ENCODE measurements at regions of chr16 and their contacts with region 1.

Region 1: DNA sequence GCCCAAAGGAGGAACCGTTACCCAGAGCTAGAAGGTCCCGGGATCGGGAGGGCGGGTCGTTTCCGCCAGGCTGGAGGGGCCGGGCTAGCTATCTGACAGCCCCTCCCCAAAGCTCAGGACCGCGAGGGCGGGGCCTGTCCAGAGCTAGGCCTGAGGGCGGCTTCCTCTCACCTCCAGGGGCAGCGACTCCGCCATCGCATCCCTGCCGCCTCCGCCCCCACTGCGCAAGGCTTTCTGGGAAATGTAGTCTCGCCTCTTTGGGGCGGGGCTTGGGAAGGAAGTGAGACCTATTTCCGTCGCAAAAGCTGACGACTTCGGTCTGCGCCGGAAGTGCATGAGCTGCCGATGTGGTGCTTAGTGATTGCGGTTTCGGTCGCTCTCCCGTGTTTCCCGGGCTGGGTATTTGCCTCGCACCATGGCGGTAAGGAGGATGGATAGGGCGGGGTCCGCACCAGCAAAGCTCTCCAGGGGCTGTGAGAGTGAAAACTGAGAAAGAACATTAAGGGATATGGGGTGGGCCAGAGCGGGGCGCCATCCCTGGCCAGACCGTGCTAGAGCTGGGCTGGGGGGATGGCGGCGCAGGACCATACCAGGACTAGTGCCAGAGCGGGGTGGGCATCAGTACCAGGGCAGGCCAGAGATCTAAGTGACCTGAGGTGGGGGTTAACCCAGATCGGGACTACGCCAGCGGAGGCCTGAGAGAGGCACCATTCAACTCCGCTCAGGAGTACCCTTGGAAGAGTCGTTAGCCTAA is at the start of gene TMEM208:
- DNase-seq: peak; percentile 98
- ATAC-seq: peak; percentile 98
- H3K4me3 Mint-ChIP-seq: peak within 1 kb of the TSS; percentile 100
- H3K27ac Mint-ChIP-seq: peak within 1 kb of the TSS; percentile 99
- H3K4me1 Mint-ChIP-seq: peaks cover 27% of the 10 kb centered on the region
- H3K27me3 Mint-ChIP-seq: no peaks in the 10 kb centered on the region
- CTCF ChIP-seq: no peak
- total RNA-seq, gene TMEM208: 37.1 and 41.3 TPM in 2 replicates

Region 2: GRCh38 chr16:67183627-67184328 is 43.2 kb before region 1 on chr16 and contains the start of gene MATCAP1:
- CTCF ChIA-PET with region 1: no interaction called
- POLR2A ChIA-PET with region 1: interaction called, 6 read pairs
- intact Hi-C with region 1: loop called (anchors 2 kb)
- DNase-seq: peak; percentile 94
- ATAC-seq: peak; percentile 96
- H3K4me3 Mint-ChIP-seq: peak within 1 kb of the TSS; percentile 85
- H3K27ac Mint-ChIP-seq: no peak within 1 kb of the TSS
- H3K4me1 Mint-ChIP-seq: peaks cover 14% of the 10 kb centered on the region
- H3K27me3 Mint-ChIP-seq: peaks cover 12% of the 10 kb centered on the region
- CTCF ChIP-seq: no peak
- total RNA-seq, gene MATCAP1: 10.6 and 18.7 TPM in 2 replicates

Region 3: DNA sequence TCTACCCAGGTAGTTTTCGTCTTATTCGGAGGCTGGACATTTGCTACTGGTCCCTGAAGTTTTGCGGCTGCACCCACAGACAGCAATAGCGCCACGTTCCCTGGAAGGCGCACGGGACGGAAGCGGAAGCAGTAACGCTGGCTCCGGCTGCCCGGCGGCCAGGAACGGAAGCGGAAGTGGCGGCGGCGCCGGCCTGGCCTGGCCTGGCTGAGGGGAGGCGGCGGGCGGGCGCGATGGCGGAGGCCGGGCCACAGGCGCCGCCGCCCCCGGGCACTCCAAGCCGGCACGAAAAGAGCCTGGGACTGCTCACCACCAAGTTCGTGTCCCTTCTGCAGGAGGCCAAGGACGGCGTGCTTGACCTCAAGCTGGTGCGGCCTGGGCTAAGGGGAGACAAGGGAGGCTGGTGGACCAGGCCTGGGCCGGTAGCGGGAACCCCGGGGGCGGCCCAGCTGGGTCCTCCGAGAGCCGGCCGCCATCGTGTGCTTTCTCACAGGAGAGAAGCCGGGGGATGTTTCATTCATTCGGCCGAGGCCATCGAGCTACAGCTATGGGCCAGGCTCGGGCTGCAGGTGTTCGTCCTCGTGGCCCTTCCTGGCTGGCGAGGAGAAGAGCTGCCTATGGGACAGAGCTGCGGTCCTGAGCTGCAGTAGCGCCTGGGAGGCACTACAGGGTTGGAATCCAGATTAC is 34.8 kb before region 1 on chr16 and contains the start of gene E2F4:
- CTCF ChIA-PET with region 1: no interaction called
- POLR2A ChIA-PET with region 1: interaction called, 13 read pairs
- intact Hi-C with region 1: loop called (anchors 1 kb)
- DNase-seq: peak; percentile 85
- ATAC-seq: peak; percentile 98
- H3K4me3 Mint-ChIP-seq: peak within 1 kb of the TSS; percentile 87
- H3K27ac Mint-ChIP-seq: peak within 1 kb of the TSS; percentile 70
- H3K4me1 Mint-ChIP-seq: peaks cover 32% of the 10 kb centered on the region
- H3K27me3 Mint-ChIP-seq: peaks cover 3% of the 10 kb centered on the region
- CTCF ChIP-seq: no peak
- total RNA-seq, gene E2F4: 117 and 128 TPM in 2 replicates

Region 4: GRCh38 chr16:67279296-67280089 is 52.5 kb after region 1 on chr16 and contains the start of gene PLEKHG4:
- CTCF ChIA-PET with region 1: no interaction called
- POLR2A ChIA-PET with region 1: interaction called, 3 read pairs
- intact Hi-C with region 1: loop called (anchors 2 kb)
- DNase-seq: peak; percentile 73
- ATAC-seq: peak; percentile 97
- H3K4me3 Mint-ChIP-seq: peak within 1 kb of the TSS; percentile 79
- H3K27ac Mint-ChIP-seq: no peak within 1 kb of the TSS
- H3K4me1 Mint-ChIP-seq: peaks cover 3% of the 10 kb centered on the region
- H3K27me3 Mint-ChIP-seq: no peaks in the 10 kb centered on the region
- CTCF ChIP-seq: peak; percentile 41
- total RNA-seq, gene PLEKHG4: 7.8 TPM in 2 replicates